ENCODE measurements at regions of chr15 and their contacts with region 1.

Region 1: DNA sequence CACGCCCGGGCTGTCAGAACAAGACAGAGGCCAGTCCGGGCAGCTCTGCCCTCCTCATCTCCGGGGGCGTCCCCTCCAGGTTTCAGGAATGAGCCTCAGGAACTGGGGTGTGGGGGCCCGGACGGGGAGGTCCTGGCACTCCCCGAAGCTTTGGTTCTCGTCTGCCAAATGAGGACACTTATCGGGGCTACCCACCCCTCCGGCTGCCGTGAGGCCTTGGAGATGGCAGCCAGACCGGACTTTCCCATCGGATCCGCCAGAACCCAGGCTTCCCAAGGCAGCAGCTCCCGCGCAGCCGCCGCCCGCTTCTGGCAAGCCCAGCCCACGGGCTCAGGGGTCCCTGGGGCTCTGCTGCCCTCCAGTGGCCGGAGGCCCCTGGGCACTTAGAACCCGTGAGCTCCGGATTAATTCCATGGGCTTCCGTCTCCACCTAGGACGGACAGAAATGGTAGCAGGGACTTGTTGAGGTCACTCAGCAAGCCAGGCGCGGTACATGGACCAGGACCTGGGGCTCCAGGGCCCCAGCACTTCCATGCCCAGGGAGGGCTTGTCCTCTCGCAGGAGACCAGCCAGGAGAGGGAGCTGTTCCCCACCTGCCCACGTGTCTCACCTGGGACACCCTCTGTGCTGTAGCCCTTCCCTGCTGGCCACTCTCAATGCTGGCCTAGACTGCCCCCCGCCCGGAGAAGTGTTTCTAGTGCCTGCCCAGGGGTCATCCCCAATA is 89.4 kb downstream of the LINGO1 start:
- DNase-seq: peak; percentile 57 to 87 (median 75)
- ATAC-seq: peak; percentile 94
- H3K4me3 ChIP-seq: peak overlapping the region; percentile 71 to 72
- H3K4me3 Mint-ChIP-seq: peak overlapping the region; percentile 76
- H3K27ac ChIP-seq: peak overlapping the region; percentile 10 to 24
- H3K27ac Mint-ChIP-seq: no peak overlapping the region
- H3K4me1 ChIP-seq: peaks cover 9% of the 10 kb centered on the region
- H3K4me1 Mint-ChIP-seq: peaks cover 14% of the 10 kb centered on the region
- H3K27me3 ChIP-seq: no peaks in the 10 kb centered on the region
- H3K27me3 Mint-ChIP-seq: no peaks in the 10 kb centered on the region
- CTCF ChIP-seq: peak; percentile 94

Region 2: DNA sequence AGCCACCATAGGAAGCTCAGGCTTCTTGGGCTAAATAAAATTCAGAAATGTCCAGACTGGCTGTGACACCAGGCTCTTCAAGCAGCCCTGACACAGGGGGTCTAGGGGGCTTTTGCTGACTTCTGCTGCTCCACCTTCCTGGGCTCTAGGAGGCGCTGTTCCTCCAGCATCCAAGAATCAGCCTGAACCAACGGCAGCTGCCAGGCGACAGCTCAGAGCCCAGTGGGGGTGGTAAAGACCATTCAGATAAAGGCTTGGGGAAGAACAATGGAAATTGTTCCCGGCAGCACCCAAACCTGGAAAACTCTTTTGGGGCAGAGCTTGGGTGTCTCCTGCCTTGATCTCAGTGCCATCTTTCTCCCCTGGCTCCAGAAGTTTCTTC is 570.0 kb before region 1 on chr15:
- CTCF ChIA-PET with region 1: interaction called, 33 read pairs
- POLR2A ChIA-PET with region 1: no interaction called
- intact Hi-C with region 1: loop called (anchors 1 kb)
- DNase-seq: peak; percentile 39 to 85 (median 75)
- ATAC-seq: peak; percentile 84
- H3K4me3 ChIP-seq: no peak overlapping the region
- H3K4me3 Mint-ChIP-seq: no peak overlapping the region
- H3K27ac ChIP-seq: no peak overlapping the region
- H3K27ac Mint-ChIP-seq: no peak overlapping the region
- H3K4me1 ChIP-seq: peaks cover 4% of the 10 kb centered on the region
- H3K4me1 Mint-ChIP-seq: peaks cover 14% of the 10 kb centered on the region
- H3K27me3 ChIP-seq: no peaks in the 10 kb centered on the region
- H3K27me3 Mint-ChIP-seq: no peaks in the 10 kb centered on the region
- CTCF ChIP-seq: peak; percentile 86

Region 3: DNA sequence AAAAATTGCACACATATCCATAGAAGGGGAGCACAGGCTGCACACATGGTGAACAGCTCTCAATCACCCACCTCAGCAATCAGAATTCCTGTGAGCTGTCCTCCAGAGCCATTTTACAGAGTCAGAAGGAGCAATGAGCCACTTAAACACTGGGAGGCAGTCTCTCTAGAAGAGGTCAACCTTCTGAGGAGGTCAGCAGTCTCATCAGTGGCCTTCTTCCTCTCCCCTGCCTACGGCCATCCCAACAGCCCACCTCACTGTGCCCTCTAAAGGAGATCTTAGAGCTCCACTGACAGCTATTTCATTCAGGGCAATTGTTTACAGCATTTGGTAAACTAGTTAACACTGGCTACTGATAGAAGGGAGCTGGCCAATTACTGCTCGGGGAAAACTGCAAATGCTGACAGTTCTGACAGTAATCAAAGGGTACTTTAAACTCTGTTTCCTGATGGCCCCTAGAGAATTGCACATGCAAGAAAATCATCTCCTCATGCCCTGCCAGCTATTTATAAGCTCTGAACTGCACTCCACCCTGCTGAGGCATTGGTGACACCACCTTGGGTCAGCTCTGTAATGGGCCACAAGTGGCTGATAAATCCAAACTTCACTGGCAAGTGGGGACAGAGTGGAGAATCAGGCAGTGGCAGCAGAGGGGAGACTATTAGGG is 430.4 kb before region 1 on chr15:
- CTCF ChIA-PET with region 1: interaction called, 70 read pairs
- POLR2A ChIA-PET with region 1: interaction called, 3 read pairs
- intact Hi-C with region 1: loop called (anchors 1 kb)
- DNase-seq: no peak
- ATAC-seq: no peak
- H3K4me3 ChIP-seq: no peak overlapping the region
- H3K4me3 Mint-ChIP-seq: no peak overlapping the region
- H3K27ac ChIP-seq: no peak overlapping the region
- H3K27ac Mint-ChIP-seq: no peak overlapping the region
- H3K4me1 ChIP-seq: no peaks in the 10 kb centered on the region
- H3K4me1 Mint-ChIP-seq: no peaks in the 10 kb centered on the region
- H3K27me3 ChIP-seq: no peaks in the 10 kb centered on the region
- H3K27me3 Mint-ChIP-seq: no peaks in the 10 kb centered on the region
- CTCF ChIP-seq: no peak

Region 4: DNA sequence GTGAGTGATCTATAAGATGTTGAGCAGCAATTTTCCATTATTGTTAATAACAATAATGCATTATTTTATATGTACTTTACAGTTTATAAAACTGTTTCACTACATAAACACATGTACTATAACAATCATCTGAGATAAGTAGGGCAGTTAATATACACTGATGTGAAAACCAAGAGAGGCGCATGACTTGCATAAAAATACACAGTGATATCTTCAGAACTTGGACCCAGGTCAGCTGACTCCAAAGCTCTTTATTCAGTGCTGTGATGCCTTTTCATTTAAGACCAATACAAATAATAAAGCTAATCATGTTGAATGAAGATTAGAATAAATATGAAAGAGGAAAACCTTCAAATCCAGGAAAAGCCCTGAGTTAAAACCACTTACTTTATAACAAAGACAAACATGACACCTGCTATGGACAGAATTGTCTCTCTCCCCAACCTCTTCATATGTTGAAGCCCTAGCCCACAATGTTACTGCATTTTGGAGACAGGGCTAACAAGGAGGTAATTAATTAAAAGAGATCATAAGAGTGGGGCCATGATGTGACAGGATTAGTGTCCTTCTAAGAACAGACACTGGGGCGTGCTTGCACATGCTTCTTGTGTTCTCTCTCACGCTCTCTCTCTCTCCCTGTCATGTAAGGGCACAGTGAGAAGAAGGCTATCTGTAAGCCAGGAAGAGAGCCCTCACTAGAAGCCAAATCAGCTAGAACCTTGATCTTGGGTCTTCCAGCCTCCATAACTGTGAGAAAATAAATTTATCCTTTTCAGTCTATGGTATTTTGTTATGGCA is 416.6 kb before region 1 on chr15:
- CTCF ChIA-PET with region 1: interaction called, 15 read pairs
- POLR2A ChIA-PET with region 1: no interaction called
- intact Hi-C with region 1: no loop called
- DNase-seq: no peak
- ATAC-seq: no peak
- H3K4me3 ChIP-seq: no peak overlapping the region
- H3K4me3 Mint-ChIP-seq: no peak overlapping the region
- H3K27ac ChIP-seq: no peak overlapping the region
- H3K27ac Mint-ChIP-seq: no peak overlapping the region
- H3K4me1 ChIP-seq: no peaks in the 10 kb centered on the region
- H3K4me1 Mint-ChIP-seq: no peaks in the 10 kb centered on the region
- H3K27me3 ChIP-seq: no peaks in the 10 kb centered on the region
- H3K27me3 Mint-ChIP-seq: no peaks in the 10 kb centered on the region
- CTCF ChIP-seq: no peak

Region 5: GRCh38 chr15:77384585-77385359 is 158.5 kb before region 1 on chr15:
- CTCF ChIA-PET with region 1: no interaction called
- POLR2A ChIA-PET with region 1: no interaction called
- intact Hi-C with region 1: no loop called
- DNase-seq: no peak
- ATAC-seq: no peak
- H3K4me3 ChIP-seq: no peak overlapping the region
- H3K4me3 Mint-ChIP-seq: no peak overlapping the region
- H3K27ac ChIP-seq: no peak overlapping the region
- H3K27ac Mint-ChIP-seq: no peak overlapping the region
- H3K4me1 ChIP-seq: no peaks in the 10 kb centered on the region
- H3K4me1 Mint-ChIP-seq: peaks cover 11% of the 10 kb centered on the region
- H3K27me3 ChIP-seq: no peaks in the 10 kb centered on the region
- H3K27me3 Mint-ChIP-seq: no peaks in the 10 kb centered on the region
- CTCF ChIP-seq: no peak

Region 6: DNA sequence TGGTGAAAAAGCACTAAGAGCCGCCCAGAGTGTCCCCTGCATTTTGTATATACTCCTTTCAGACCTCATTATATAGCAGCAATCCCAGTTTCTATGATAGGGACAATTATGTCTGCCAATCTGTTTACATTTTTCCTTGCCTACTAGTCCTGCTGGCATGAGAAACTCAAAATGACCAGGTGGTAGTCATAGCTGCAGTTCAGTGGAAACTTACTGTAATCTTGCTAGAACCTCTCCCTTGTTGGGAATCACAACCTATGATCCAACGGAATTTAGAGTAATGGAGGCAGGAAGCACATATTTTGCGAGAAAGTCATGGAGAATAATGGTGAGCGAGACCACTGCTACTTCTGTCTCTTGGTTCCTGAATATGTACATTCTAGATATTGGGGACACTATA is 1860.2 kb after region 1 on chr15:
- CTCF ChIA-PET with region 1: no interaction called
- POLR2A ChIA-PET with region 1: no interaction called
- intact Hi-C with region 1: no loop called
- DNase-seq: no peak
- ATAC-seq: no peak
- H3K4me3 ChIP-seq: no peak overlapping the region
- H3K4me3 Mint-ChIP-seq: no peak overlapping the region
- H3K27ac ChIP-seq: no peak overlapping the region
- H3K27ac Mint-ChIP-seq: no peak overlapping the region
- H3K4me1 ChIP-seq: no peaks in the 10 kb centered on the region
- H3K4me1 Mint-ChIP-seq: no peaks in the 10 kb centered on the region
- H3K27me3 ChIP-seq: no peaks in the 10 kb centered on the region
- H3K27me3 Mint-ChIP-seq: no peaks in the 10 kb centered on the region
- CTCF ChIP-seq: no peak